GM13976 (cell line): ENCODE measurements at regions of chr2 and their contacts with region 1.

Region 1: DNA sequence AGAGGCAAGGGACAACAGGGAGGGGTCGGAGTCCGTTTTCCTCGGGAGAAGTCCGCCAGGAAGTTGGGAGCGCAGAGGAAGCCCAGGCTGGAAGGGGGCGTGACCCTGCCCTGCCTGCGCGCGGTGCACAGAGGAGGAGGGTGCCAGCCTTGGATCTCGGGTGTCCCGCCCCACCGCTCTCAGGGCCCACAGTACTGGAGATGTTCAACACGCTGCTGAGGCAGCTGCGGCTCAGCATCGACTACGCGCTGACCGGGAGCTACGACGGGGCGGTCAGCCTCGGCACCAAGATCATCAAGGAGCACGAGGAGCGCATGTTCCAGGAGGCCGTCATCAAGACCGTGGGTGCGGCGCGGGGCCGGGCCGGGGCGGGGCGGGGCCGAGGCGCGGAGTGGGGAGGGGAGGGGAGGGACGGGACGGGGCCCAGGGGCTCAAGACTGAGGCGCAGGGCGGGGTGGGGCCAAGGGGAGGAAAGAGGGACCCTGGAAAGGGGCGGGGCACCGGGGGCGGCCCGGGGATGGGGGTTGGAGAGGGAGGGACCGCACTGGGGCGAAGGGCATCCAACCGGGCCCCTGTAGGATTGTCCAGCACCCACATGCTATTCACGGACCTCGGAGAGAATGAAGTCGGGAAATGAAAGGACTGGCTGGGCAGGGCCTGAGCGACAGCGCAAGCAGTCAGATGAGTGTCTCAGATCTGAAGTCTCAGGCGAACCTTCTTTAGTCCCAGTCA is 36.6 kb downstream of the POMC start:
- DNase-seq: peak; percentile 49
- CTCF ChIP-seq: no peak

Region 2: DNA sequence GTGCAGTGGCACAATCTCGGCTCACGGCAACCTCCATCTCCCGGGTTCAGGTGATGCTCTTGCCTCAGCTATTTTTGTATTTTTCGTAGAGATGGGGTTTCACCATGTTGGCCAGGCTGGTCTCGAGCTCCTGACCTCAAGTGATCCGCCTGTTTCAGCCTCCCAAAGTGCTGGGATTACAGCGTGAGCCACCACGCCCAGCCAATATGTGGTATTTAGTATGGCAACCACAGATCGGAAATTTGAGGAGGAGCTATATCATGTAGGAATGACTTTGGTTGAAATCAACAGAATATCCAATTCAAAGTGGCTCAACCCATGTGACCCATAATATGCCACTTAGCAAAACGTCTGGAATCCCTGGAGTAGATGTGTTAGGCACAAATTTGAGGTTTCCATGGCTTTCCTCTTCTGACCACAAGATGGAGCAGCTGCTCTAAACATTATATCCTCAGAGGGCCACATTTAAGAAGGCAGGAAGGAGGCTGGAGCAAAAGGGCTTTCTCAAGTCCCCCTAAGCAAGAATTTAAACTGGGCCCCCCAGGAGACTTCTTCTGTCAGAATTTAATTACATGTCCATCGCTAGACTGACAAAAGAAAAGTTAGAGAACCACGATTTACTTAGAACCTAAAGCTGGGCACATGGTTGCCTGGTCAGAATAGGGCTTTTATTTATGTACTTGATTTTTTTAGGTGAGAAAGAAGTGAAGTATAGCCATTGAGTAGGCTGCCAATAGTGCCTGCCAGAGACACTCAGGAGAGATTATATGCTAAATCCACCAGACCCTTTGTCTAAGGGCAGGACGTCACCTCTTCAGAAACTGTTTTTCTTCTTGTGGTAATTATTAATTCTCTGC is 721.8 kb before region 1 on chr2:
- in situ Hi-C with region 1: loop called (anchors 25 kb)
- DNase-seq: peak; percentile 75
- CTCF ChIP-seq: peak; percentile 58

Region 3: GRCh38 chr2:24984912-24985311 is 146.8 kb before region 1 on chr2:
- in situ Hi-C with region 1: loop called (anchors 10 kb)
- DNase-seq: no peak
- CTCF ChIP-seq: no peak